Esophagus muscularis mucosa (tissue), 4 donors: ENCODE measurements at regions of chr3 and their contacts with region 1.

Region 1: GRCh38 chr3:67037615-67038014 is 39.5 kb downstream of the KBTBD8 start:
- DNase-seq: no peak
- H3K4me3 ChIP-seq: no peak overlapping the region
- H3K27ac ChIP-seq: no peak overlapping the region
- H3K4me1 ChIP-seq: no peaks in the 10 kb centered on the region
- H3K27me3 ChIP-seq: no peaks in the 10 kb centered on the region
- CTCF ChIP-seq: peak; percentile 18 to 32 (median 22)
- EP300 ChIP-seq: no peak
- POLR2A ChIP-seq: no peak

Region 2: GRCh38 chr3:66544619-66545429 is 492.8 kb before region 1 on chr3:
- intact Hi-C with region 1: no loop called
- DNase-seq: no peak
- H3K4me3 ChIP-seq: no peak overlapping the region
- H3K27ac ChIP-seq: no peak overlapping the region
- H3K4me1 ChIP-seq: no peaks in the 10 kb centered on the region
- H3K27me3 ChIP-seq: no peaks in the 10 kb centered on the region
- CTCF ChIP-seq: no peak
- EP300 ChIP-seq: no peak
- POLR2A ChIP-seq: no peak

Region 3: GRCh38 chr3:66971891-66972551 is 65.6 kb before region 1 on chr3:
- intact Hi-C with region 1: loop called (anchors 5 kb)
- DNase-seq: no peak
- H3K4me3 ChIP-seq: peak overlapping the region; percentile 31 to 54 (median 44)
- H3K27ac ChIP-seq: peak overlapping the region; percentile 55 to 71 (median 62)
- H3K4me1 ChIP-seq: peaks cover 7 to 16% (median 12%) of the 10 kb centered on the region in 4 donors
- H3K27me3 ChIP-seq: no peaks in the 10 kb centered on the region
- CTCF ChIP-seq: peak; percentile 72 to 82 (median 76)
- EP300 ChIP-seq: no peak
- POLR2A ChIP-seq: no peak

Region 4: DNA sequence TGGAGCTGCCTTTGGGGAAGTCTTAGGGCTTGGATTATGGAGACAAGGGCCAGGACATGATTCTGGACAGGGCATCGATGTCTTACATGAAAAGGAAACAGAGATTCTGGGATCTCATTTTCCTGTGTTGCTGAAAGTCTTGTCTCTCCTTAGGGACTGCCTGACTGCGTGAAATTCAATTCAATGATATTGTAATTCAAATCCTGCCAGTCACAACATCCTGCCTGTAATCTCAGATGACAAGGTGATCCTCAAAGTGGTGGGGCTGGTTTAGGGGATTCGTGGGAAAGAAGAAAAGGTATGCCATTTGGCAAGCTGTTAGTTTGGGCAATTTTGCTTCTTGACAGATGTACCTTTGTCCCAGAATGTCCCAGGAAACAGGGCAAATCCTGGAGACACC is 89.6 kb after region 1 on chr3:
- intact Hi-C with region 1: no loop called
- DNase-seq: no peak
- H3K4me3 ChIP-seq: no peak overlapping the region
- H3K27ac ChIP-seq: no peak overlapping the region
- H3K4me1 ChIP-seq: no peaks in the 10 kb centered on the region
- H3K27me3 ChIP-seq: no peaks in the 10 kb centered on the region
- CTCF ChIP-seq: no peak
- EP300 ChIP-seq: no peak
- POLR2A ChIP-seq: no peak

Region 5: GRCh38 chr3:67401921-67402320 is 364.3 kb after region 1 on chr3:
- intact Hi-C with region 1: no loop called
- DNase-seq: no peak
- H3K4me3 ChIP-seq: no peak overlapping the region
- H3K27ac ChIP-seq: no peak overlapping the region
- H3K4me1 ChIP-seq: no peaks in the 10 kb centered on the region
- H3K27me3 ChIP-seq: no peaks in the 10 kb centered on the region
- CTCF ChIP-seq: no peak
- EP300 ChIP-seq: no peak
- POLR2A ChIP-seq: no peak

Region 6: DNA sequence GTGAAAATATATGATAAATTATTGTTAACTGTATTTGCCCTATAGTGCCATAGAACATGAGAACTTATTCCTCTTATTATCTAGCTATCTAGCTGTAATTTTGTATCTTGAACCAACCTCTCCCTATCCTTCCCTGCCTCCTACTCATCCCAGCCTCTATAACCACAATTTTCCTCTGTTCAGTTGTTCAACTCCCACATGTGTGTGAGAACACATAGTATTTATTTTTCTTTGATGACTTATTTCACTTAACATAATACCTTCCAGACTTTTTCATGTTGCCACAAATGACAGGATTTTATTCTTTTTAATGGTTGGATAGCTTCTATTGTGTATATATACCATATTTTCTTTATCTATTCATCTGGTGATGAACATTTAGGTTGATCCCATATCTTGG is 702.2 kb after region 1 on chr3:
- intact Hi-C with region 1: no loop called
- DNase-seq: no peak
- H3K4me3 ChIP-seq: no peak overlapping the region
- H3K27ac ChIP-seq: no peak overlapping the region
- H3K4me1 ChIP-seq: no peaks in the 10 kb centered on the region
- H3K27me3 ChIP-seq: no peaks in the 10 kb centered on the region
- CTCF ChIP-seq: no peak
- EP300 ChIP-seq: no peak
- POLR2A ChIP-seq: no peak